ENCODE measurements at regions of chr13 and their contacts with region 1.

Region 1: GRCh38 chr13:77480066-77480465 is 55.4 kb upstream of the SCEL start:
- DNase-seq: no peak
- H3K4me3 Mint-ChIP-seq: no peak overlapping the region
- H3K27ac Mint-ChIP-seq: no peak overlapping the region
- H3K4me1 Mint-ChIP-seq: peaks cover 17% of the 10 kb centered on the region
- H3K27me3 Mint-ChIP-seq: peaks cover 6% of the 10 kb centered on the region

Region 2: DNA sequence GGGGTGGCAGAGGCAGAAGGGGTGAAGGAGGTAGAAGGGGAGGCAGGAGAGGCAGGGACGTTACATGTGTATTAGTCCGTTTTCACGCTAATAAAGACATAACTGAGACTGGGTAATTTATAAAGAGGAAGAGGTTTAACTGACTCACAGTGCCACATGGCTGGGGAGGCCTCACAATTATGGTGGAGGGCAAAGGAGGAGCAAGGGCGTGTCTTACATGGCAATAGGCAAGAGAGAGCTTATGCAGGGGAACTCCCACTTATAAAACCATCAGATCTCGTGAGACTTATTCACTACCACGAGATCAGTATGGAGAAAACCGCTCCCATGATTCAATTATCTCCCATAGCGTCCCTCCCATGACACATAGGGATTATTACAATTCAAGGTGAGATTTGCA is 550.7 kb before region 1 on chr13:
- intact Hi-C with region 1: no loop called
- DNase-seq: no peak
- H3K4me3 Mint-ChIP-seq: no peak overlapping the region
- H3K27ac Mint-ChIP-seq: no peak overlapping the region
- H3K4me1 Mint-ChIP-seq: no peaks in the 10 kb centered on the region
- H3K27me3 Mint-ChIP-seq: peaks cover 7% of the 10 kb centered on the region

Region 3: GRCh38 chr13:77026818-77027585 is 453.1 kb before region 1 on chr13 and contains the start of gene FBXL3:
- intact Hi-C with region 1: loop called (anchors 1 kb)
- DNase-seq: peak; percentile 78
- H3K4me3 Mint-ChIP-seq: peak within 1 kb of the TSS; percentile 94
- H3K27ac Mint-ChIP-seq: peak within 1 kb of the TSS; percentile 93
- H3K4me1 Mint-ChIP-seq: peaks cover 58% of the 10 kb centered on the region
- H3K27me3 Mint-ChIP-seq: no peaks in the 10 kb centered on the region
- total RNA-seq, gene FBXL3: 40.1 and 40.8 TPM in 2 replicates

Region 4: GRCh38 chr13:77274126-77274525 is 205.9 kb before region 1 on chr13:
- intact Hi-C with region 1: loop called (anchors 5 kb)
- DNase-seq: no peak
- H3K4me3 Mint-ChIP-seq: no peak overlapping the region
- H3K27ac Mint-ChIP-seq: no peak overlapping the region
- H3K4me1 Mint-ChIP-seq: peaks cover 15% of the 10 kb centered on the region
- H3K27me3 Mint-ChIP-seq: no peaks in the 10 kb centered on the region

Region 5: GRCh38 chr13:77329133-77329910 is 150.7 kb before region 1 on chr13:
- intact Hi-C with region 1: loop called (anchors 1 kb)
- DNase-seq: peak; percentile 88
- H3K4me3 Mint-ChIP-seq: peak overlapping the region; percentile 88
- H3K27ac Mint-ChIP-seq: peak overlapping the region; percentile 93
- H3K4me1 Mint-ChIP-seq: peaks cover 38% of the 10 kb centered on the region
- H3K27me3 Mint-ChIP-seq: peaks cover 5% of the 10 kb centered on the region

Region 6: DNA sequence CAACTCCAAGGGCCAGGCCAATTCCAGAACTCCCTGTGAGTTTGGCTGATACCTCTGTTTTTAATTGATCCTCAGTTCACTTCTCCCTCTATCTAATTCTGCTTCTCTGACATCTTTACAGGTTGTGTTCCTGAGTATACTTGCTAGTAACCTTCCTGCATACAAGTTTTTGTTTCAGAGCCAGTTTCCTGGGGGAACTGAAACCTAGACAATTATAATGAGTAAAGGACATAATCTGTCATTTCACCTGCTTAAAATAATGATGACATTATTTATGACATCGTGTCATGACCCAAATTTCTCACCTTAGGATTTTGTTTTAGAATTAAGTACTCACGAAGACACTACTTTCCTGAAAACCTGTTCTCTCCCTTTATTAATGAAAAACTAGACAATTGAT is 140.7 kb before region 1 on chr13:
- intact Hi-C with region 1: no loop called
- DNase-seq: no peak
- H3K4me3 Mint-ChIP-seq: no peak overlapping the region
- H3K27ac Mint-ChIP-seq: no peak overlapping the region
- H3K4me1 Mint-ChIP-seq: peaks cover 21% of the 10 kb centered on the region
- H3K27me3 Mint-ChIP-seq: no peaks in the 10 kb centered on the region

Region 7: DNA sequence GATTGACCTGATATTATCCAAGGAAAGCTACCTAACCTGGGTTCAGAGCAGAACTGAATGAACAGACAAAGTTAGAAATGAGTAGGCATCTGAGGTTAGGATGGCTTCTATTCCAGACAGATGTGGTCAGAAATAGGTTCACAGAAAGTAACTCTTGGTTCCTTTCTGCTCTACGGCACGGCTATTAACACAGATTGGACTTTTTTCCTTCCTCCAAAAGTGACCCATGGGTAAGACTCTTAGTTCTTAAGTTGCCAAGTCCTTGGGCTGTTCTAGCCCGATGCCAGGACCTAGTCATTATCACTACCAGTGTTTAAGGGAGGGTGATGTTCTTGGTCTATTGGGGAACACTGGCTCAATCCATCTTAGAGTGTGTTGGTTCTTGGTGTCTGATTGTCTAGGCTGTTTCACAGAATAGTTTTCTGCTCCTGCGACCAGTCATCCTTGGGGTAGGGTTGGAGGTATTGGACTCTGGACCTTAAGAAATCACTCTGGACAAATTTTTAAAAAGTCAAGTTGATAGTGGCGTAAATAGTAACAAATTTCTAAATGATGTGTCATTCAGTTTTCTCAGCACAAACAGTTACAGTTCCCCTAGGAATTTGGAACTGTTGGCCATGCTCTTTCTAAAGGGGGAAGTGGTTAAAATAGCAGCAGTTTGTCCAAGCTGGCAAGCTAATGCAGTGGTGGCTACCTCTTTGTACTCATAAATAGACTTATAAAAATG is 93.0 kb before region 1 on chr13:
- intact Hi-C with region 1: loop called (anchors 5 kb)
- DNase-seq: no peak
- H3K4me3 Mint-ChIP-seq: no peak overlapping the region
- H3K27ac Mint-ChIP-seq: no peak overlapping the region
- H3K4me1 Mint-ChIP-seq: peaks cover 11% of the 10 kb centered on the region
- H3K27me3 Mint-ChIP-seq: peaks cover 42% of the 10 kb centered on the region

Region 8: DNA sequence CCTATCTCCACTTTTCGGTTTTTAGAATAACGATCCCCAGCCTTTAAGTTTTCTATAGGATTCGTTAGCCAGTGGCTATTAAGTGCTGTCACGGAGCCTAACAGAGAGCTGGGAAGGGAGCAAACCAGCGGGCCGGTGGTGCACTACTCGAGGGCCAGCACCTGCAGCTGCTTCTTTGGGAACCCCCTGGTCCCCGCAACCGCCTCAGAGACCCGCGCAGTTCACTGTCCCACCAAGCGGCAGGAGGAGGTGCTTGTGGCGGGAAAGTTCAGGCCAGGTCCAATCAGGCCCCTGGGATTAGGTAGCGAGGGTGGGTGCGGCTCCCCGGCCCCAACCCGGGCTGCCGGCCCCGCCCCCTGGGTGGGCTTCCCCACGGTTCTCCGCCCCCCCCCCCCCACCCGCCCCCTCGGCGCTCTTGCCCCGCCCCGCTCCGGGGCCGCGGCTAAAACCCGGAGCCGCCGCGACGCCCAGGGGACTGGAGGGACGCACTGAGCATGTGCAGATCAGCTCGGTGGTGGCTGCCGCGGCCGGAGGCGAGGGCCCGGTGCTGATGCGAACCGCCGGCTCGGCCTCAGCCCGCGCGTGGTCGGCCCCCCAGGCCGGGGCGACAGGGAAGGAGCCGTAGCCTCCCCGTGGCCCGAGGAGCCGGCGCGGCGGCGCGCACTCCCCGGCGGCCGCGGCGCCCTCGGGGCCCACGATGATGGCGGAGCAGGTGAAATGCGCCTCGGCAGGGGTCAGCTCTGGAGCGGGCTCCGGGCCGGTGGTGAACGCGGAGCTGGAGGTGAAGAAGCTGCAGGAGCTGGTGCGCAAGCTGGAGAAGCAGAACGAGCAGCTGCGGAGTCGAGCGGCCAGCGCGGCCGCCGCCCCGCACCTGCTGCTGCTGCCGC is 217.4 kb after region 1 on chr13 and contains the start of gene SLAIN1:
- intact Hi-C with region 1: loop called (anchors 5 kb)
- DNase-seq: peak; percentile 71
- H3K4me3 Mint-ChIP-seq: peak within 1 kb of the TSS; percentile 95
- H3K27ac Mint-ChIP-seq: peak within 1 kb of the TSS; percentile 47
- H3K4me1 Mint-ChIP-seq: peaks cover 38% of the 10 kb centered on the region
- H3K27me3 Mint-ChIP-seq: peaks cover 26% of the 10 kb centered on the region
- total RNA-seq, gene SLAIN1: 36.3 and 43.3 TPM in 2 replicates

Region 9: DNA sequence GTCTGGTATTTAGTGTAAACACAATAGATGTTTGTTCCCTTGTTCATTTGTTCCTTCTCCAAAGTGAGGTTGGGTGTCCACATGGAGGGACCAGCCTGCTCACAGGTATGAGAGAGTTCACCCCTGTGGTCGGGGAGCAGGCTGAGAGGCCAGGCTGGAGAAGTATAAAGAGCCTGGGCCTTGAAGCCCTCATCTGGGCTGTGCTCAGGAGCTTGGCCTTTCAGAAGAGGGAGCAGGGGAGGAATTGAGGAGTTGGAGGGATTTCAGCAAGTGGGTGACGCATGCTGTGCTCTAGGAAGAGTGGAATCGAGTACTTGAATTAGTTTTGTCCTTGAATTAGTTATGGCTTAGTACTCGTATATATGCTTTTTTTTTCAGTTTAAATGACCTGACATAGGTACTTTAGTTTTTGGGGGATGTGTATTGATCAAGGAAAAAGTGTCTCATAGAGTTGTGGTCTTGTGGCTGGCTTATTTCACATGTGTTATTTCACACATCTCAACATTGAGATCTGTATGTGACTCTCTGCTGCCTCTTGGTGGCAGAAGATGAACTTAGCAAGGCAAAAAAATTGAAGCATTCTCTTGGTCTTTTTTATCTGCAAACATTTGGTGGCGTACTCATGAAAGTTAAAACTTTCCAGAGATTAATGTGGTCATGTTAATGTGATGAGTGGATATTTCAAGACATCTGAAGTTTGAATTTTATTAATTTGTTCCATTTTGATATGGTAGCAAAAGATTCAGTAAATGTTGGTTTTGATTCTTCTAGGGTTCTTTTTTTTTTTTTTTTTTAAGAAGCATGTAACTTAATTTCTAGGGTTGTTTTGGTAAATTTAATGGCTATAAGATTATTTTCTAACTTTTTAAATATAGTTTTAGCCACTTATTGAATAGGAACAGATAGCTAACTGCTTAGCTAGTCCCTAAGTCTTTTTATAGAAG is 271.7 kb after region 1 on chr13:
- intact Hi-C with region 1: loop called (anchors 1 kb)
- DNase-seq: peak; percentile 44
- H3K4me3 Mint-ChIP-seq: no peak overlapping the region
- H3K27ac Mint-ChIP-seq: peak overlapping the region; percentile 42
- H3K4me1 Mint-ChIP-seq: peaks cover 18% of the 10 kb centered on the region
- H3K27me3 Mint-ChIP-seq: no peaks in the 10 kb centered on the region